ENCODE measurements at regions of chr20 and their contacts with region 1.

Region 1: GRCh38 chr20:13819885-13820645 is 35.2 kb downstream of the NDUFAF5 start:
- DNase-seq: peak; percentile 30
- ATAC-seq: peak; percentile 82
- H3K4me3 ChIP-seq: no peak overlapping the region
- H3K27ac ChIP-seq: no peak overlapping the region
- H3K4me1 ChIP-seq: no peaks in the 10 kb centered on the region
- H3K27me3 ChIP-seq: no peaks in the 10 kb centered on the region
- CTCF ChIP-seq: peak; percentile 74

Region 2: DNA sequence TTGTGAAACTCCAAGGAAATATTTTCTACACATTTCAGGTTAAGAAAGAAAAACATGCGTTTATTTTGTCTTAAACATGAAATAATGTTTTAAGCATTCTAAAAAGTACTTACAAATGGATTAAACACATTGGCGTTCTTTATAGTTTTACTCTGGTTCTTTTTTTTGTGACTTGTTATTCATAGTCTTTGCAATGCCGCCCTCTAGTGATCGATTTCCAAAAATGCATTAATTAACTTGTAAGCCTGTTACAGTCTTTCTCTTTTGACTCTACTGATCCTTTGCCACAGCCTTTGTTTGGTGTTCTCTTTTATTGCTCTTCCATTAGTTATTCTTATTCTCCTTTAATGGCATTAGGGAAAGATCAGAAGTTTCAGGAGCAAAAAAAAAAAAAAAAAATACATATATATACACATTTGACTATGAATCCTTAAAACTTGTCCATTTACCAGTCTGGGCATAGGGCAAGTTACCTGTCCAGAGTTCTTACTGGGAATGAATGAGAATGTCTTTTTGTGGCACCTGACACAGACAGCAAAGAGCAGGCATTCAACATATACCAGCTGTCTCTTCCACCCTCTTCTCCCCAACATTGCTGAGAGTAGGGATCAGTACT is 235.2 kb after region 1 on chr20:
- CTCF ChIA-PET with region 1: interaction called, 7 read pairs
- POLR2A ChIA-PET with region 1: no interaction called
- in situ Hi-C with region 1: no loop called
- intact Hi-C with region 1: loop called (anchors 1 kb)
- DNase-seq: peak; percentile 51
- ATAC-seq: 0 out of 2 replicates have a peak, but pooled peaks have one; percentile 58
- H3K4me3 ChIP-seq: no peak overlapping the region
- H3K27ac ChIP-seq: no peak overlapping the region
- H3K4me1 ChIP-seq: no peaks in the 10 kb centered on the region
- H3K27me3 ChIP-seq: peaks cover 3% of the 10 kb centered on the region; the same call in 1 of the 2 replicates
- CTCF ChIP-seq: peak; percentile 60; the same call in 1 of the 2 replicates

Region 3: DNA sequence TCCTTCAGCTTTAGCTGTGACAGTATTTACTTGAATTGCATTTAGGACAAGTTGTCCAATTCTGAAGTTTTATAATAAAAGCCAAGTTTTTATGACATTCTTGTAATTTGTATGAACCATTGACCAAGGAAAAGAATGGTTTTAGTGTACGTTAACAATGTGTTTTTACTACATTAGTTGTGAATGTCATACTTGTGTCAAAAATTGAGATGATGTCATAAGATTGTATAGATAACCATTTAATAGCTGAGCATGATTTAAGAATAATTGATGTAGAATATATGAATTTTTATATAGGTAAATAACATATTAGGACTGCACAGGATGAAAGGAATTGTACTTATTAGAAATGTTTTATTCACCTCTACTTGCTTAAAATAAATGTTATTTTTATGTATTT is 278.2 kb after region 1 on chr20:
- CTCF ChIA-PET with region 1: no interaction called
- POLR2A ChIA-PET with region 1: no interaction called
- in situ Hi-C with region 1: no loop called
- intact Hi-C with region 1: no loop called
- DNase-seq: no peak
- ATAC-seq: no peak
- H3K4me3 ChIP-seq: no peak overlapping the region
- H3K27ac ChIP-seq: no peak overlapping the region
- H3K4me1 ChIP-seq: no peaks in the 10 kb centered on the region
- H3K27me3 ChIP-seq: no peaks in the 10 kb centered on the region
- CTCF ChIP-seq: no peak

Region 4: DNA sequence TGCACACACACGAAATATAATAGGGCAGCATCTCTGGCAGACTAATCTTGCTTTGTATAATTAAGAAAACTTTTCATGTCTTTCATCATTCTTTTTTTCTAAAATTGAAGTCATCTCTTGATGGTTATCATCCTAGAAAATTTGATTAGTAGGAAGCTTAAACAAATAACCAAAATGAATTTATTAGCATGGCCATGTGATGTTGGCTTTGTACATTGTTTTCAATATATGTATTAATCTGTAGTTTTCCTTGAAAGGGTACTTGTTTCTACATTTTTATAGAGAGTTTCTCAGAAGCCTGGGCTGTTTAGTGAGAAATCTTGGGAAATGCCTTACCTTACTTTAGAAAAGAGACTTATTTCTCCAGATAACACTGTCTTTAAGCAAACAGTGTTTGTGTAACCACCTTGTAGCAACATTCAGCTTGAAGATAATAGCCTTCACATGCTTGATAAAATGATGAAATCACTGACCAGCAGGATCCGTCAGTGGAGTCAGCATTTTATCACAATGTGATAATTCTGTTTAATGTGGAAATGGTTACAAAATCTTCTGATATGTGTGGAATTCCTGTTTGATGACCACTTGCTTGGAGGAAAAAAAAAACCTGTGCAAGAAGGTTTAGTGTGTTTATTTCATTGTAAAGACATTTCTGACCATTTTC is 323.0 kb after region 1 on chr20:
- CTCF ChIA-PET with region 1: no interaction called
- POLR2A ChIA-PET with region 1: no interaction called
- in situ Hi-C with region 1: no loop called
- intact Hi-C with region 1: no loop called
- DNase-seq: no peak
- ATAC-seq: no peak
- H3K4me3 ChIP-seq: no peak overlapping the region
- H3K27ac ChIP-seq: no peak overlapping the region
- H3K4me1 ChIP-seq: no peaks in the 10 kb centered on the region
- H3K27me3 ChIP-seq: no peaks in the 10 kb centered on the region
- CTCF ChIP-seq: no peak

Measured in Panc1 (cell line).